A549 (cell line): ENCODE measurements at regions of chr7 and their contacts with region 1.

Region 1: DNA sequence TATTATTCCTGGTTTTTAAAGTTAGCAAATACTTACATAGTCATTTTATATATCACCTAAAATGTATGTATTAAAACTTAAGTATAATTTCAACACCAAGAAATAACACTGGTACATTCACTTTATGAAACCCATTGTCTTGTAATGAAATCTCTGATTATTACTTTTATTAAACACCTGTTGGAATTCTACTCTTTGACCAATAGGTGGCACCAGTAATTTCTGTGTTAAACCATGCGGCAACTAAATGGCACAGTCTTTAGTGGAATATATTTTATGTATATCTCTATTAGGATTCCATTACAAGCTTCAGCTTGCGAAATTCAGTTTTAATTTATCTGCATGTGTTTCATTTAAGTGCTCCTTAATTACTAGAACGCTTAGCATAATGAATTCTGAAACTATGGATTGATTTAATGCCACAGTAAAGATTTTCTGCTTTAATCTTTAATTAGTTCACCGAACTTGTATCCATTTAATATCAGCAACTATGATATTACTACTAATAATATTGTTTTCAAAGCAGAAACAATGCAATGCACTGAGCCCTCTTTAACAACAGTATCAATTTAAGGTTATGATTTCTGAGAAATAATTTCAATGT is 181.3 kb downstream of the MAGI2 start:
- DNase-seq: peak; percentile 18 to 63
- ATAC-seq: peak in 1 of 2 experiments; percentile 63; a peak in 3 of 6 replicates
- H3K4me3 ChIP-seq: no peak overlapping the region
- H3K27ac ChIP-seq: no peak overlapping the region
- H3K4me1 ChIP-seq: no peaks in the 10 kb centered on the region
- CTCF ChIP-seq: peak; percentile 81
- EP300 ChIP-seq: no peak
- POLR2A ChIP-seq: no peak
- RAD21 ChIP-seq: peak; percentile 75 to 76

Region 2: DNA sequence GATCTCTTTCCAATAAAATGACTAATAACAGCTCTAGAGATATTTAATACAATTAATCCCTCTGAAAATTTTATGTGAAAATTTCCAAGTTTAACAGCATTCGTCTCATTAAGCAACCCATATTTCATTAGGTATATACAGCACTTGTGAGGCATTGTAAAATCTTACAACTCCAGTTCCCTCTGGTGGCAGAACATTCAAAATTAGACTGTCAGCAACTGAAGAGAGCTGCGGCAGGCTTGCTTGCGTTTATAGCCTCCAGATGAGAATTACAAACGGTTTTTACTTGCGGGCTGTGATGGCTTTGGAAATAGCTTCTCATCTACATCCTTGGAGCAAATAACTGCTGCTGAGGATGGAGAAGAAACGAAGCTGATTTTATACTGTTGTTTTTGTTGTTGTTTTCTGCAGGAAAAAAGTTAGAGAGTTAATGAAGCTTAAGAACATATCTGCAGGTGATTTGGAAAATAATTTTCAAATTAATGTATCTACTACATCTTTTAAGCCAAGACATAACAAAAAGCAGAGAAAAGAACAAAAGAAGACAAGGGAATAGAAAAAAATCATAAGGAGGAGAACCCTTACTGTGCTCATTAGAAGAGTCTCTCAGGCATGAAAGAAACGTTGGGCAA is 10.0 kb after region 1 on chr7:
- CTCF ChIA-PET with region 1: interaction called, 12 read pairs
- POLR2A ChIA-PET with region 1: no interaction called
- DNase-seq: peak; percentile 45 to 79
- ATAC-seq: peak; percentile 87 to 89; a peak in 5 of 6 replicates
- H3K4me3 ChIP-seq: no peak overlapping the region
- H3K27ac ChIP-seq: peak overlapping the region; percentile 54 to 56
- H3K4me1 ChIP-seq: peaks cover 28% of the 10 kb centered on the region
- CTCF ChIP-seq: peak; percentile 46; the same call in 2 of the 3 replicates
- EP300 ChIP-seq: no peak
- POLR2A ChIP-seq: no peak
- RAD21 ChIP-seq: peak; percentile 54 to 62; a peak in 4 of 5 replicates